ENCODE measurements at regions of chr4 and their contacts with region 1.

Region 1: DNA sequence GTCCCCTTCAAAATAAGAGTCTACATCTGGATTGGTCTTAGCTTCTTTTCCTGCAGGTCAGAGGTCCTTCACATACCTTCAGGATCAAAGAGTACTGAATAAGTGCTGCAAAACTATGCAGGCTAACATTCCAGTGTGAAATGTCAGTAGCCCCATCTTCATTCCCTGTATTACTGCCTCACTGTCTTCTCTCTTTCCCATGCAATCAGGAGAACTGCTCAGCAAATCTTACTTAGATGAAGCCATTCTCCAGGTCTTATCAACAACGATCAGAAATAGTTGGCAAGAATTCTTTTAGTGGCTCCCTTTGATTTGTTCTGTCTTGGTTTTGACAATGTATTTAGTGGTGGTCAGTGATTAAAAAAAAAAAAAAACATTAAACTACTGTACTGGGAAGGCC is 26.0 kb upstream of the IQCM start:
- DNase-seq: no peak
- H3K4me3 Mint-ChIP-seq: no peak overlapping the region
- H3K27ac Mint-ChIP-seq: no peak overlapping the region
- H3K4me1 Mint-ChIP-seq: peaks cover 6% of the 10 kb centered on the region
- H3K27me3 Mint-ChIP-seq: no peaks in the 10 kb centered on the region
- CTCF ChIP-seq: no peak

Region 2: DNA sequence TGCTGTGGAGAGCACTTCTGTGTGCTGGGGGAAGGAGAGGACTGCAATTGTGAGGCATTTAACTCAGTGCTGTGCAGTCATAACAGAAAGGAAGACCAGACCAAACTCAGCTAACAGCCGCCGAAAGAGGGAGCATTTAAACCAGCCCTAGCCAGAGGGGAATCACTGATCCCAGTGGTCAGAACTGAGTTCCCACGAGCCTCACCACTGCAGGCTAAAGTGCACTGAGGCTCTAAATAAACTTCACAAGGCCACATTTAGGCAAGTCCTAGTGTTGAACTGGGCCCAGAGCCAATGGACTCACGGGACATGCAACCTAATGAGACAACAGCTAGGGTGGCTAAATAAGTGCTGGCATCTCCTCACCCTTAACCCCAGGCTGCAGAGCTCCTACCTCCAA is 46.4 kb before region 1 on chr4:
- CTCF ChIA-PET with region 1: no interaction called
- POLR2A ChIA-PET with region 1: no interaction called
- intact Hi-C with region 1: loop called (anchors 2 kb)
- DNase-seq: no peak
- H3K4me3 Mint-ChIP-seq: no peak overlapping the region
- H3K27ac Mint-ChIP-seq: no peak overlapping the region
- H3K4me1 Mint-ChIP-seq: peaks cover 12% of the 10 kb centered on the region
- H3K27me3 Mint-ChIP-seq: no peaks in the 10 kb centered on the region
- CTCF ChIP-seq: no peak

Measured in MCF 10A (cell line).